ENCODE measurements at regions of chr6 and their contacts with region 1.

Region 1: DNA sequence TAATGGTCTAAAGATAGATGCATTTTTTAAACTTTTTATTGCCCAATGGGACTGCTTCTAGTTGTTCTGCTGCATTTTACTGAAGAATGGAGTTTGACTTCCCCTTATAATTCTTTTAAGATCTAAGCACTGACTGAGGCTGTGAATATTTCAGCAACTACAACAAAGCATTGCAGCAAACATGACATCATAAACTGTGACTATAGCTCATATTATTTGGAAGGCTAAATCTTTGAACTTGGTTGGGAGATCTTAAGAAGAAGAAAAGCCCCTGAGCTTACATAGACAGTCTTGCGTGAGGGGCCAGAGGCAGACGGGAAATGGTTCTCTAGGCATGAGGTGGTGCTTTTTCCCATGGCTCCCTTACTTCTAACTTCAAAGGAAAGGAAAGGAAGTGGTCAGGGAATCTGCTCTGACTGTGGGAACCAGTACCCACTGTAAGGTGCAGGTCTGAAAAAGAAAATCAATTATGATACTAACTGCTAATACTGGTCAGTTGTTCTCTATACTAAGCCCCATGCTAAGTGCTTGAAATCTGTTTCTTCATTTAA is 14.8 kb downstream of the HEY2 start:
- DNase-seq: no peak
- ATAC-seq: no peak
- H3K4me3 ChIP-seq: no peak overlapping the region
- H3K27ac ChIP-seq: no peak overlapping the region
- H3K4me1 ChIP-seq: no peaks in the 10 kb centered on the region
- H3K27me3 ChIP-seq: no peaks in the 10 kb centered on the region
- CTCF ChIP-seq: no peak

Region 2: GRCh38 chr6:125301435-125302391 is 462.5 kb before region 1 on chr6 and contains the start of gene HDDC2:
- intact Hi-C with region 1: loop called in 2 of 3 experiments (anchors 5 to 10 kb)
- DNase-seq: peak; percentile 68 to 89 (median 75)
- ATAC-seq: peak; percentile 89 to 93 (median 90)
- H3K4me3 ChIP-seq: peak within 1 kb of the TSS; percentile 78 to 84 (median 80)
- H3K27ac ChIP-seq: peak within 1 kb of the TSS; percentile 77 to 88 (median 84)
- H3K4me1 ChIP-seq: peaks cover 0 to 13% (median 5%) of the 10 kb centered on the region in 3 donors
- H3K27me3 ChIP-seq: no peaks in the 10 kb centered on the region
- CTCF ChIP-seq: no peak
- total RNA-seq, gene HDDC2: 22.9 to 33.9 (median 27.1) TPM

Region 3: DNA sequence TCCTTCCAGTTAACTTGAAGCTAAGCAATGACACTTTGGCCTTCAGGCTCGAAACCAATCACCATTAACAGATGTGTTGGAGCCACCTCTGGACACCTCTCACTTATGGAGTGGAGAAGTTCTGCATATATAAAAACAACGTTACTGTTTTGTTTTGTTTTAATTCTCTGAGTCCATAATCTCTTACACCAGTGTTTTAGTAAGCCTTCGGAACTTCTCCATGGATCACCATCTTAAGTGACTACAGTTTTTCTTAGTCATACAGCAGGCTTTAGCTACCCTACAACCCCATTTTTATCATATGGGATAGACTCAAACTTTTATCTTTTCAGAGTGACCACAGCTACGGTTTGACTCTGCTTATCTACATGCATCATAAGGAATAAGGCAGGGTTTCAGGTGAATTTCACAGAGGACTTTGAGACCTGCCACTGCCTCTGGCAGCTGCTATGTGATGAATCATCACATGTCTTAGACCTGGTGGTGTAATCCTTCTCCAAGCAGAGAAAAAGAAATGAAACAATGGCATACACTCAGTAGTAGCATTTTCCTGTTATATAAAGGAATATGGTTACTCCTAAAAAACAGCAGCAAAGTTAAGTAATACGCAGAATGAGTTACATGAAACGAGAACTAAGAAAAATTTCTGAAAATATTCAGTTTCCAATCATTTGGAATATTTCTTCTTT is 456.9 kb before region 1 on chr6:
- intact Hi-C with region 1: loop called (anchors 5 to 10 kb)
- DNase-seq: no peak
- ATAC-seq: peak in 2 of 4 donors; percentile 12 to 29
- H3K4me3 ChIP-seq: no peak overlapping the region
- H3K27ac ChIP-seq: no peak overlapping the region
- H3K4me1 ChIP-seq: no peaks in the 10 kb centered on the region
- H3K27me3 ChIP-seq: no peaks in the 10 kb centered on the region
- CTCF ChIP-seq: no peak

Region 4: DNA sequence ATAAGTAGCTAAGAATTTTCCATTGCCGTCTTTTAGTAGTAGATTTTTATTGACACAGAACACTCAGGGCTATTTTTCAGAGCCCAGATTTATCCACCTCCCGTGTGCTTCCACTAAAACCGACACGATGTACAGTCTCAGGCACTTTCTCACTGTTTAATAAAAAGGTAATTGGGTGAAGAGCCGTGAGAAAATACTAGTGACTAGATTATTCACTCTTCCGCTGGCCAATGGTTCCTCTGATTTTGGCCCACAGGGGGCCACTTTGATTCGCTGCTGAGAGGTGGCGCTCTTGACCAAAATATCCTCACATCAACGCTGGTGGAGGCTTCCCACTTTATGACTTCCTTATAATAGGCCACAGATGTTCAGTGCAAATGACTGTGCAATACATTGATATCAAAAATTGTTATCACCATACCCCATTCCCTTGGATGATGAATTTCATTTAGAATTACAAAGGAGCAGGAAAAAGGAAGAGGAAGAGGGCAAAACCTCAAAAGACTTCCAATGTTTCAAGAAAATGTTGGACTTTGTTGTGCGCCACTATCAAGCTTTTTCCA is 450.1 kb before region 1 on chr6:
- intact Hi-C with region 1: loop called (anchors 5 to 10 kb)
- DNase-seq: peak in 4 of 6 donors; percentile 34 to 62 (median 38)
- ATAC-seq: peak; percentile 83 to 93 (median 92)
- H3K4me3 ChIP-seq: no peak overlapping the region
- H3K27ac ChIP-seq: no peak overlapping the region
- H3K4me1 ChIP-seq: no peaks in the 10 kb centered on the region
- H3K27me3 ChIP-seq: peaks cover 0 to 9% (median 0%) of the 10 kb centered on the region in 4 donors
- CTCF ChIP-seq: peak in 3 of 4 donors; percentile 55 to 59 (median 58)

Region 5: DNA sequence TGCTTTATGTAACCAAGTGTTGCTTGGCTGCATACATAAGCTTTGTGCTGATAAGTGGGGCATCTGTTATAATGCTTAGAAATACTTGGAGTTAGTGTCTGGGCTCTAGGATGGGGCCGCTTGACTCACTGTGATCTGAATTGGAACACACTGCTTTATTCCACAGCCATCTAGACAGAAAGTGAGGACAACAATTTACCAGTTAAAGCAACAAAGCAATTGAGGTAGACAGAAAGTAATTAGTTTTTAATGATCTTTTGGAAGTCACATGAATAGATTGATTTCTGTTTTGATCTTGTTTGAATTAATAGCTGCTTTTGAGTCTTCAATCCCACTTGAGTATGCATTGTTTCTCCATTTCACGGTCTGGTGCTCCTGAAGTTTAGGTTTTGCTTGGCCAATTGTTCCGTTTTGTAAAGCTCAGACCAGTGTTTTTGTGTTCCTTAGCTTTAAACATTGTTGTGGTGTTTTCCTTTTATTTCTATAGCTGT is 379.6 kb after region 1 on chr6:
- intact Hi-C with region 1: no loop called
- DNase-seq: no peak
- ATAC-seq: no peak
- H3K4me3 ChIP-seq: no peak overlapping the region
- H3K27ac ChIP-seq: no peak overlapping the region
- H3K4me1 ChIP-seq: no peaks in the 10 kb centered on the region
- H3K27me3 ChIP-seq: no peaks in the 10 kb centered on the region
- CTCF ChIP-seq: no peak